ENCODE measurements at regions of chr3 and their contacts with region 1.

Region 1: GRCh38 chr3:10957976-10958749 is 34.4 kb upstream of the SLC6A1 start:
- DNase-seq: peak in 4 of 5 donors; percentile 42 to 91 (median 64)
- ATAC-seq: peak; percentile 6 to 71 (median 66)
- H3K4me3 ChIP-seq: no peak overlapping the region
- H3K27ac ChIP-seq: peak overlapping the region in 1 of 12 donors; percentile 9
- H3K4me1 ChIP-seq: peaks cover 0 to 37% (median 22%) of the 10 kb centered on the region in 12 donors
- H3K27me3 ChIP-seq: peaks cover 0 to 5% (median 0%) of the 10 kb centered on the region in 9 donors
- CTCF ChIP-seq: no peak
- POLR2A ChIP-seq: no peak

Region 2: GRCh38 chr3:10992017-10992941 is 34.1 kb after region 1 on chr3 and contains the start of gene SLC6A1:
- intact Hi-C with region 1: loop called in 1 of 10 experiments (anchors 5 kb)
- DNase-seq: peak in 2 of 5 donors; percentile 43 to 46
- ATAC-seq: peak in 3 of 4 donors; percentile 70 to 87 (median 71)
- H3K4me3 ChIP-seq: peak within 1 kb of the TSS in 11 of 12 donors; percentile 24 to 66 (median 51)
- H3K27ac ChIP-seq: peak within 1 kb of the TSS in 6 of 12 donors; percentile 16 to 71 (median 58)
- H3K4me1 ChIP-seq: peaks cover 0 to 19% (median 3%) of the 10 kb centered on the region in 12 donors
- H3K27me3 ChIP-seq: peaks cover 8 to 51% (median 18%) of the 10 kb centered on the region in 9 donors
- CTCF ChIP-seq: peak in 6 of 12 donors; percentile 15 to 48 (median 32)
- POLR2A ChIP-seq: no peak
- total RNA-seq, gene SLC6A1: 0.40 to 3.1 (median 1.2) TPM